Mucosa of descending colon (tissue), 3 donors: ENCODE measurements at regions of chr3 and their contacts with region 1.

Region 1: DNA sequence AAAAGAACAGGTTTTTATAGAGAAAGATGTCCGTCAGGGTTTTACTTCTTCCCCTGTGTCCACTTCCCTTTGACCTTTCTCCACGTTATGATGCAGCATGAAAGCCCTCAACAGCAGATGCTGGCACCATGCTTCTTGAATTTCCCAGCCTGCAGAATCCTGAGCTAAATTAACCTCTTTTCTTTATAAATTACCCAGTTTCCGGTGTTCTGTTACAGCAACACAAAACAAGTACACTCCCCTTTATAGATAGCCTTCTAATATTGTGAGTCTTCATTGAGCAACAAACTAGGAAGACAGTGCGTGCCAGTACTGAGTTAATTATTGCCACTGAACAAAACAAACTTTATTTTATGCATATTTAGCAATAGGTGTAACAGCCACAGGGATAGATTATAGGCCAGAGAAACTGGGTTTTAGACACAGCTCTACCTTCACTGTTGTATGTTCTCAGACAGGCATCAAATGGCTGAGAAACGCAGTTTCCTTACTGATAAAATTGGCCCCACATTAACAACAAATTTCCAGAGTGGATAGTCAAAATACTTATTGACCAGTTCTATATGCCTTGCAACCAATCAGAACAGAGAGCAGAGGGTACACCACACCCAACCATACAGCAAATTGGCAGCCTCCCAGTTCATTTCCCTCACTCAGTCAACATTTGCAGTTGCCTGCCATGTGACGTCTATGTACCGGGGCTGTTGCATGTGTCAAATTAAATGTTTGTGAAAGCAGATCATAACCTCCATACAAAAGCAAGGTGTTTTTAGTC is 14.4 kb upstream of the TBL1XR1 start:
- DNase-seq: peak in 2 of 3 donors; percentile 65 to 95
- ATAC-seq: peak; percentile 95
- H3K4me3 ChIP-seq: no peak overlapping the region
- H3K4me1 ChIP-seq: peaks cover 30% of the 10 kb centered on the region
- CTCF ChIP-seq: no peak

Region 2: DNA sequence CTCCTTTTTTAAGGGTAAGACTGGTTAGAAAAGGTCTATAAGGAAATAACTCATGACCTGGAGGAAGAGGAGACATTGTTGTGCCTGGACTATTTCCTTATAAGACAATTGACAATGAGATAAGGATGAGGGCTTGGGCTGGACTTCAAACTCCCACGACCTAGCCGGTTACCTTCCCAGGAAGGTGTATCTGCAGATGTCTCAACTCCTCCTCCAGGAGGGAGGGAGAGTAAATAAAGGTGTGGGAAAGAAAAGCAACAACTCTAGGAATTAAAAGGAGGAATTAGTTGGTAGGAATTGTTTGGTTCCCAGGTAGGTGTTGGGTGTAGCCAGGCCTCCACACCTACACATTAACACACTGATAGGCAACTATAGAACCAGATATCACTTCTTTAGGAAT is 83.4 kb after region 1 on chr3:
- intact Hi-C with region 1: loop called in 1 of 2 experiments (anchors 5 kb)
- DNase-seq: peak in 1 of 3 donors; percentile 80
- ATAC-seq: peak; percentile 89
- H3K4me3 ChIP-seq: no peak overlapping the region
- H3K4me1 ChIP-seq: peaks cover 44% of the 10 kb centered on the region
- CTCF ChIP-seq: peak; percentile 8

Region 3: DNA sequence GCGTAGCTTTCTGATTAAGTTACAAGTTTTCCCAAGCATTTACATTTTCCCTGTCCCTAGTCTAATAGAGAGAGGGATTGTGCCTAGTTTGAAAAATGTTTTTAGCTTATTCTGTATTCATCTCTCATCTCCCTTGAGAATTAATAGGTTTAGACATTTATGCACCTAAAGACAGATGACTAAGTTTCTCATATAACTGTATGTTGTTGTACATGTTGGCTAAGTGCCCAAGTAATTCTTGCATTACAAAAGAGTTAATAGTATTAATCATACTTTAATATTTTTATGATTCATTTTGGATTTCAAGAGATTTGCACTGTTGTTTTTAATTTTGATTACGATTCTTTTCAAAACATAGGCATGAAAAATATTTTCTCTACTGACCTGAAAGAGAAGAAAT is 94.6 kb after region 1 on chr3:
- intact Hi-C with region 1: no loop called
- DNase-seq: no peak
- ATAC-seq: no peak
- H3K4me3 ChIP-seq: no peak overlapping the region
- H3K4me1 ChIP-seq: peaks cover 14% of the 10 kb centered on the region
- CTCF ChIP-seq: no peak